Caco-2 (cell line): ENCODE measurements at regions of chr2 and their contacts with region 1.

Region 1: GRCh38 chr2:20446917-20447436 is at the start of gene RHOB:
- DNase-seq: peak; percentile 97 to 98
- H3K4me3 ChIP-seq: peak within 1 kb of the TSS; percentile 80
- H3K4me3 Mint-ChIP-seq: peak within 1 kb of the TSS; percentile 87
- H3K27ac Mint-ChIP-seq: peak within 1 kb of the TSS; percentile 84
- H3K4me1 ChIP-seq: peaks cover 26% of the 10 kb centered on the region
- H3K4me1 Mint-ChIP-seq: peaks cover 8% of the 10 kb centered on the region
- H3K27me3 ChIP-seq: no peaks in the 10 kb centered on the region
- H3K27me3 Mint-ChIP-seq: no peaks in the 10 kb centered on the region
- CTCF ChIP-seq: no peak
- total RNA-seq, gene RHOB: 20.8 and 24.1 TPM in 2 replicates

Region 2: GRCh38 chr2:20474757-20475566 is 28.0 kb after region 1 on chr2:
- CTCF ChIA-PET with region 1: interaction called, 5 read pairs
- POLR2A ChIA-PET with region 1: interaction called, 12 read pairs
- intact Hi-C with region 1: no loop called
- DNase-seq: no peak
- H3K4me3 ChIP-seq: no peak overlapping the region
- H3K4me3 Mint-ChIP-seq: no peak overlapping the region
- H3K27ac Mint-ChIP-seq: peak overlapping the region; percentile 26
- H3K4me1 ChIP-seq: peaks cover 9% of the 10 kb centered on the region; the same call in 1 of the 2 replicates
- H3K4me1 Mint-ChIP-seq: peaks cover 9% of the 10 kb centered on the region
- H3K27me3 ChIP-seq: no peaks in the 10 kb centered on the region
- H3K27me3 Mint-ChIP-seq: peaks cover 2% of the 10 kb centered on the region
- CTCF ChIP-seq: no peak

Region 3: DNA sequence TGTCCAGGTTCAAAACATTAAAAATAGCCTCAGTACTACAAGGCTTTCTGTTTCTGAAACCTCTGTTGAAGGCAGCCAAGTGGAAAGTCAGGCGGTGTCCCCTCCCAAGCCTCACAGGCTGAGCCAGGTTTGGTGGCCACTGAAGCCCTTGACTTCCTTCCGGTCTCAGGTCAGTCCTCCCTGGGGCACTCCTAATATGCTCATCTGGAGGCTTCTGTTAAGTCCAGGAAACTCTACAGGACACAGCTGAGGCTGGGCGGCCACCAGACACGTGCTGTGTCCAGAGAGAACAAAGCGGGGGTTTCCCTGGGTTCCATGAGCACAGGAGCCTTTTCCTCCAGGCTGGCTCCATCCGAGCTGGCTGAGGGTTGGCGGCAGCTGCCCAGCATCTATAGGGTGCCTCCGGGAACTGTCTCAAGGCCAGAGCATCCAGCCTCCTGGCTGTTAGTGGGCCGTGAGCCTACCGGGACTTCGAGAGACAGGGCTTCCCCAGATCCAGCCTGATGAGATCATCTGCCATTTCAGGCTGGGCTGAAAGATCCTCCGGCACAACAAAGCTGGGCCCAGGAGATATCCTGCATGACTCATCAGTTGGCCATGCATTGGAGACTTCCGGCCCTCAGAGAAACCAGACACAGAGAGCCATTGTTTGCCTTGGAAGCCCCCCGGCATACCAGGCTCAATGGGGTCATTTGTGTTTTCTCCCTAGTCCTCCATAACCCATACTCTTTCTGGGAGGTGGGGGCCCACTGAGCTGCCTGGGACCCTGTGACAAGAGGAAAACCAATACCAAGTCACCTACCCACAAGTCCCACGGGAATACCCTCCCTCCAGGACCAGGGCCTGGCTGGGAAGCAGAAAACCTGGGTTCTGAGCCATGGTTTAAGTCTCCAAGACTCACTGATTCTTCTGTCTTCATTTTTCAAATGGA is 132.2 kb after region 1 on chr2:
- CTCF ChIA-PET with region 1: no interaction called
- POLR2A ChIA-PET with region 1: interaction called, 15 read pairs
- intact Hi-C with region 1: loop called (anchors 1 kb)
- DNase-seq: peak; percentile 65 to 84
- H3K4me3 ChIP-seq: no peak overlapping the region
- H3K4me3 Mint-ChIP-seq: no peak overlapping the region
- H3K27ac Mint-ChIP-seq: peak overlapping the region; percentile 85
- H3K4me1 ChIP-seq: peaks cover 53% of the 10 kb centered on the region
- H3K4me1 Mint-ChIP-seq: peaks cover 40% of the 10 kb centered on the region
- H3K27me3 ChIP-seq: no peaks in the 10 kb centered on the region
- H3K27me3 Mint-ChIP-seq: no peaks in the 10 kb centered on the region
- CTCF ChIP-seq: no peak

Region 4: DNA sequence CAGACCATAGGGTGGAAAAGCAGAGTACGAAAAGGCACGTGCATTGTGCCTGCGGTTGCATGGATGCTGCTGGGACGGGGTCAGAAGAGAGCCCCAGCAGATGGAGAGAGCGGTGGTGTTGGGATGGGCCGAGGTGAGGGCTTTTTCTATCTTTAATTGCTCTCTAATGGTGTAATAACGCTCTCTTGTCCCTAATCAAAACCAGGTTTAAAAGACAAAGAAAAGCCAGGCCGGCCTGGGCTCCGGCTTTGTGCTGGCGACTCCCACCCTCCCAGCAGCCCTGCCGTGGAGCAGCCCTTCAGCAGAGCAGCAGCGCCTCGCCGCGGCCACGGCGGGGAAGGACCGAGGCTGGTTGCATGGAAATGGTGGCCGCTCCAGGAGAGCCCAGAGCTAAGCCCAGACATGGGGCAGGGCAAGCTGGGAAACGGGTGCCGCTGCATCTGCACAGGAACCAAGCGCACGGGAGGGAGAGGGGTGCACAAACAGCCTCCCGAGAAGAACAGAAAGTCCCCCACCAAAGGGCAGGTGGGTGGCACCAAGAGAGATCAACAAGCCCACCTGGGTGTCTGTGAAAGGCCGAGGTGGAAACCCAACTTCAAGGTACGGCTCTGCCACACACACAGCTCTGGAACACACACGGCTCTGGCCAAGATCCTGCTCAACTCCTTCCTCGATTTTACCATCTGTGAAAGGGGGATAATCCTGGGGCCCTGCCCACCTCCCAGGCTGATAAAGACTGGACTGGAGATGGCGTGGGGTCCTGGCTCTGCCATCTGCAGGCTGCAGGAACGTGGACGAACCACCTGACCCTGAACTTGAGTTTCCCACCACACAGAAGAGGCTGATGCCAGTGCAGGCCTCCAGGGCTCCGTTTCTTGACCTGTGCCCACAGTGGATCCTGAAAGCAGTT is 189.0 kb after region 1 on chr2:
- CTCF ChIA-PET with region 1: interaction called, 8 read pairs
- POLR2A ChIA-PET with region 1: interaction called, 18 read pairs
- intact Hi-C with region 1: loop called (anchors 1 kb)
- DNase-seq: peak; percentile 61 to 77
- H3K4me3 ChIP-seq: no peak overlapping the region
- H3K4me3 Mint-ChIP-seq: no peak overlapping the region
- H3K27ac Mint-ChIP-seq: no peak overlapping the region
- H3K4me1 ChIP-seq: no peaks in the 10 kb centered on the region
- H3K4me1 Mint-ChIP-seq: no peaks in the 10 kb centered on the region
- H3K27me3 ChIP-seq: no peaks in the 10 kb centered on the region
- H3K27me3 Mint-ChIP-seq: no peaks in the 10 kb centered on the region
- CTCF ChIP-seq: peak; percentile 57 to 78

Region 5: DNA sequence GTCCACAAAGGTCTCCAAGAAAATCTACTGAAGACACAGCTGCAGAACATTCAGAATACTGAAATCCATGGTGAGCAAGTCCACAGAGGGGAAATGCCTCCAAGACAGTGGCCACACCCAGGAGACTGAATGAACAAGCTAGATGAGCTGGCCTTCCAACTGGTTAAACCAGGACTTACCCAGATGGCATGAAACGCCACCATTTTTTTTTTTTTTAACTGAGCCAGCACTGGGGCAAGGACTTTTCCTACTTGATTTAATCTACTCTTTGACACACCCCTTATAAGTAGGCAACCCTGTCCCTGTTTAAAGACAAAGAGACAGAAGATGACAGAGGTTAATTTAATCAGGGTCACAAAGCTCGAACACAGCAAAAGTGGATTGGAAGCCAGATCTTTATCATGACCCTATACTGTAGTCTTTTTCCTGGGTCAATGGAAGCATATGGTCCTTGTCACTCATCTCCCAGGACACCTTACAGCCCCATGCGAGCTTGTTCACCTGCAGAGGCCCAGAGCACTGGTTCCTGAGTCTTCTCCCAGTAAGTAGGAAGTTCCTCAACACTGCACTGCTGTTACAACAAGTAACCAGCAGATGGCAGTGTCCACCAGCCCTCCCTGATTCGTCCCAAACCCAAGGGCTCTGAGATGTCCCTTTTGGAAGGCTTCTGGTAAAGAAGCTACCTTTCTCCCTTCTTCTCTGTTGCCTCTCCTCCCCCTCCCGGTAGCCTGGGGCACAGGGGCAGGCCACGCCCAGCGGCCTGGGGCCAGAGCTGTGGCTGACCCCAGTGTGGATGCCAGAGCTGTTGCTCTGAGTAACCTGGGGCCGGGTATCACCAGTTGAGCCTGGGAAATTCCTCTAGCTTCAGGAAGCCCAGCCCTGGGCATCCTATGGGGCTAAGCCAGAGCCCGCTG is 214.3 kb after region 1 on chr2:
- CTCF ChIA-PET with region 1: interaction called, 12 read pairs
- POLR2A ChIA-PET with region 1: interaction called, 9 read pairs
- intact Hi-C with region 1: no loop called
- DNase-seq: peak; percentile 77 to 83
- H3K4me3 ChIP-seq: no peak overlapping the region
- H3K4me3 Mint-ChIP-seq: no peak overlapping the region
- H3K27ac Mint-ChIP-seq: no peak overlapping the region
- H3K4me1 ChIP-seq: peaks cover 10% of the 10 kb centered on the region; the same call in 1 of the 2 replicates
- H3K4me1 Mint-ChIP-seq: no peaks in the 10 kb centered on the region
- H3K27me3 ChIP-seq: no peaks in the 10 kb centered on the region
- H3K27me3 Mint-ChIP-seq: peaks cover 4% of the 10 kb centered on the region
- CTCF ChIP-seq: peak; percentile 95 to 96